ENCODE measurements at regions of chr3 and their contacts with region 1.

Region 1: DNA sequence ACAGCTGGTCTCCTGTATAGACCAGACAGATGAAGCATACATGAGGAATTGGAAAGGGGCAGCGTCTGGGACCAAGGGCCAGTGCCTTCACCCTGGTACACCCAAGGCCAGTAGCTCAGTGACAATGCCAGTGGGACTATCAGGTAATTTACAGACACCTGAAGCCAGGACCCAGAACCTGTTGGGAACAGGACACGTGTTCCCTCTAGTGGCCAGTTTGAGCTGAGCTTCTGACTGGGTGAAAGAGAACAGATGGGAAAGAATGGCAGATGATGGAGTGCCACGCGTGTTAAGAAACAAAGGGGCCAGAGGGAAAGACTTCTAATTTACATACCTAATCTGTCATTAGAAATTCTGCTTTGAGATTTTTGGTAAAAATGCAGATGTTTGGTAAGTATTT is 5.1 kb upstream of the SLC25A38 start:
- DNase-seq: no peak
- ATAC-seq: peak; percentile 92
- H3K4me3 ChIP-seq: no peak overlapping the region
- H3K27ac ChIP-seq: no peak overlapping the region; the same call in 1 of the 2 replicates
- H3K4me1 ChIP-seq: peaks cover 14% of the 10 kb centered on the region
- H3K27me3 ChIP-seq: no peaks in the 10 kb centered on the region
- CTCF ChIP-seq: peak; percentile 84 to 92 (median 91); a peak in 5 of 6 replicates
- EP300 ChIP-seq: no peak
- POLR2A ChIP-seq: no peak
- RAD21 ChIP-seq: peak; percentile 96

Region 2: DNA sequence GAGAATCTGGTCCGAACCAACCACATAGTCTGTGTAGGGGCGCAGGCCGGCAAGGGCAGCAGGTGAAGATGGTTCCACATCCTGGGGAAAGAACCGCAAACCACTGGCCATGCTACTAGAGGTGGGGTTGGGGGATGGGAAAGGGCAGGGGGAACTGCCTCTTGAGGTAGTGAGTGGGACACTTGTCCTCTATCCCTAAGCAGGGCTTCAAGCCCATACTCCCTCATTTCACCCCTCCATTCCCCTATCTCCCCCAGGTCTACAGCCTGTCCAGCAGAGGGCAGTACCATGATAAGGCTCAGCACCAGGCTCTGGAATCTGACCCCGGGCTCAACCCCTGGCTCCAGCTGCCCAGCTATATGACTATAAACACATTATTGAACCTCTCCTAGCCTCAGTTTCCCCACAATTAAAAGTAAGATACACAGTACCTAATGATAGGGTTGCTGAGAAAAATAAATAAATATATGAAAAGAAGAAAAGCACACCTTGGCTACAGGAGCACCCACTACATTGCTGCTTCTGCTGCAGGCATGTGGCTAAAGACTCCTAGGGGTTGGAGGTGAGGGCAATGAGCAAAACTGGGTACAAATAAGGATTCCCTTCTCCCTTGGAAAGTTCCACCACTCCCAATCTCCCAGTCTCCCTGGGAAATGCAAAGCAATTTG is 276.9 kb before region 1 on chr3:
- CTCF ChIA-PET with region 1: interaction called, 3 read pairs
- POLR2A ChIA-PET with region 1: no interaction called
- RAD21 ChIA-PET with region 1: no interaction called
- SMC1A ChIA-PET with region 1: no interaction called
- in situ Hi-C with region 1: no loop called
- intact Hi-C with region 1: loop called (anchors 2 kb)
- DNase-seq: no peak
- ATAC-seq: peak; percentile 89
- H3K4me3 ChIP-seq: no peak overlapping the region
- H3K27ac ChIP-seq: no peak overlapping the region
- H3K4me1 ChIP-seq: peaks cover 5% of the 10 kb centered on the region
- H3K27me3 ChIP-seq: no peaks in the 10 kb centered on the region
- CTCF ChIP-seq: peak; percentile 72 to 84 (median 83)
- EP300 ChIP-seq: no peak
- POLR2A ChIP-seq: no peak
- RAD21 ChIP-seq: peak; percentile 85

Region 3: GRCh38 chr3:39295184-39295775 is 82.8 kb before region 1 on chr3:
- CTCF ChIA-PET with region 1: interaction called, 323 read pairs
- POLR2A ChIA-PET with region 1: interaction called, 7 read pairs
- RAD21 ChIA-PET with region 1: interaction called, 232 read pairs
- SMC1A ChIA-PET with region 1: interaction called, 234 read pairs
- in situ Hi-C with region 1: loop called (anchors 5 kb)
- intact Hi-C with region 1: loop called (anchors 1 kb)
- DNase-seq: peak; percentile 95
- ATAC-seq: peak; percentile 86
- H3K4me3 ChIP-seq: no peak overlapping the region
- H3K27ac ChIP-seq: peak overlapping the region; percentile 87
- H3K4me1 ChIP-seq: peaks cover 30% of the 10 kb centered on the region
- H3K27me3 ChIP-seq: no peaks in the 10 kb centered on the region
- CTCF ChIP-seq: no peak
- EP300 ChIP-seq: peak; percentile 91 to 94
- POLR2A ChIP-seq: no peak
- RAD21 ChIP-seq: 0 out of 2 replicates have a peak, but pooled peaks have one; percentile 2

Region 4: DNA sequence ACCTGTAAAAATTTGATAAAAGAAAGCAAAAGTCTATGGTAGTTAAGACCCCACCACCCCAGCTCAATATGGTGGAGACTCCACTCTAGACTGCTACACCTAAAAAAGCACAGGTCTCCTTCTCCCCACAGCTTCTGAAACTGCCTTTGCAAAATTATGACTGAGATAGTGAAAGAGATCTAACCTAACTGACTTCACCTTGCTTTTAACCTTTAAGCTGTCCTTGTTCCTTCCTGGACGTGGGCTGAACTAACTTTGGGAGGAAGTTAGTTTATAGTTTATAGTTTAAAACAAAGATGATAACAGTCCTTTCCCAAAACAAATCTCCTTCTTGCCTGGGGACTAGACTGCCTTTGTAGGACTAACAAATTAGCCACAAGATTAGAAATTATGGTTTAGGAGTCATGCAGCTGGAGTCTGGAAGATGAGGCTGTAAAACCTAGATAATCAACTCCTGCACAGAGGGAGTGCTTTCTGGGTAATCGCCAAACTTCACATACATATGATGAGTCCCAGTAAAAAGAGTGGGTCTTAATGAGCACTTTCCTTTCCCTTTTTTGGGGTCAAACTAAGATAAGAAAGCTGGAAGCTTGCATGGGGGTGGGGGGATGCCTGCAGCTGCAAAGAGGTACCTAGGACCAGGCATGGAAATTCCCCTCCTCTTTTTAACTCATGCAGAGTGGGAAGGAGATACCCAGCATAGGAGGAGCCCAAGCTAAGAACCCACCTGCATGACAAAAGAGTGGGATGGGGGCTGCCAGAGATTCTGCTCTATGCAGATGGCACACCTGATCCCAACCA is 31.1 kb before region 1 on chr3:
- CTCF ChIA-PET with region 1: interaction called, 27 read pairs
- POLR2A ChIA-PET with region 1: interaction called, 7 read pairs
- RAD21 ChIA-PET with region 1: interaction called, 17 read pairs
- SMC1A ChIA-PET with region 1: interaction called, 16 read pairs
- in situ Hi-C with region 1: no loop called
- intact Hi-C with region 1: no loop called
- DNase-seq: no peak
- ATAC-seq: peak; percentile 91
- H3K4me3 ChIP-seq: peak overlapping the region; percentile 0; the same call in 1 of the 2 replicates
- H3K27ac ChIP-seq: peak overlapping the region; percentile 61
- H3K4me1 ChIP-seq: peaks cover 17% of the 10 kb centered on the region
- H3K27me3 ChIP-seq: no peaks in the 10 kb centered on the region
- CTCF ChIP-seq: no peak
- EP300 ChIP-seq: no peak
- POLR2A ChIP-seq: no peak
- RAD21 ChIP-seq: no peak

Region 5: DNA sequence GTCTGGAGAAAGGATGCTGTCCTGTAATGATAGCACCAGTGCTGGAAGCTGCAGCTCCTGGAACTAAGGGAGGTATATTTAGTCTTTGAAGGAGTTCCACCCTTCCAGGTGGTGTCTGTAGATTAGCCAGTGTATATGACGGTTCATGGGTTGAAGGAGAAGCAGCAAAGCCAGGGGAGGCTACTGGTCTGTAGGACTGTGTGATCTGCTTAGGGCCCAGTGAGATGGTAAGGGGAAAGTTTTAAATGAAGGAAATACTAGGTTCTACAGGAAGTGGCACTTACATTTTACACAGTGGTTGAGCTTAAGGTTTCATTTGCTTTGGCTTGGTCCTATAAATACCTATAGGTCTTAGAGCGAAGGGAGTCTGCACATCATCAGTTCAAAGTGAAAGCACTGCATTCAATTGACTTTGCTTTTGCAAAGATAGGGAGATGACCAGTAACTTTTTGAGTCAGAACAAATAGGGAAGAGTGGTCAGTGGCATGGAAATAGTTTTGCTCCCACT is 10.7 kb after region 1 on chr3:
- CTCF ChIA-PET with region 1: interaction called, 11 read pairs
- POLR2A ChIA-PET with region 1: interaction called, 3 read pairs
- RAD21 ChIA-PET with region 1: interaction called, 3 read pairs
- SMC1A ChIA-PET with region 1: interaction called, 4 read pairs
- in situ Hi-C with region 1: no loop called
- intact Hi-C with region 1: no loop called
- DNase-seq: peak; percentile 89
- ATAC-seq: peak; percentile 74
- H3K4me3 ChIP-seq: peak overlapping the region; percentile 49
- H3K27ac ChIP-seq: peak overlapping the region; percentile 85
- H3K4me1 ChIP-seq: peaks cover 24% of the 10 kb centered on the region
- H3K27me3 ChIP-seq: no peaks in the 10 kb centered on the region
- CTCF ChIP-seq: no peak
- EP300 ChIP-seq: no peak
- POLR2A ChIP-seq: no peak
- RAD21 ChIP-seq: no peak

Measured in GM12878 (cell line).